ENCODE measurements at regions of chr1 and their contacts with region 1.

Region 1: DNA sequence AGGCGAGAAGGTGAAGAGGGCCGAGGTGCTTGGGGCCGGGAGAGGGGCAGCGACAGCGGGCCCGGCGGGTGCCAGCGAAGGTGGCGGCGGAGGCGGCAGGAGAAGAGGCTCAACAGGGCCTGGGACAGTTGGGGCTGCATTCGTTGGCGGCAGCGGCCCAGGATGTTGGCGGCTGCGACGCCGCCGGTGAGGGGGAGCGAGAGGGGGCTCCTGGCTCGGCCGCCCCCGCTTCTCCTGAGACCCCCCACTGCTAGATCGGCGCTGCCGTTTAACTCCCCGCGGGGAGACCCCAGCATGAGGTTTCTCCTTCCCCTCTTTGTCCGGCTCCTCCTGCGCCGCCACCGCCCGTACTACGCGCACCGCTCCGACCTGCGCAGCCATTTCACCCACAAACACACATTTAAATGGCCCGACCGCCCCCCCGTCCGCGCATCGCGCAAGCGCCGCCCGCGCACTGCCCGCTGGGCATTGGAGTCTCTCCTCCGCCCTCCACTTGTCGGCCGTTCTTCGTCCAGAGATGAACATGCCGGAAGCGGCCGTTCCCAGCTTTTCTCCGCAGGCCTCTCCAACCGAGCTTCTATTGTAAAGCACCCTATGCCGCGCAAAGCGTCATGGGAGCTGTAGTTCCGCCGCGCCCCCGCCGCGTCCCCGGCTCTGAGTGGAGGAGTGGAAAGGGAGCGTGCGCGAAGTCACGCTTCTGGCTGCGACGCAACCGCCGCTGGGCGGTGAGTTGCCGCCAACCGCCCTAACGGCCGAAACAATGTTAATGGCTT is at the start of gene RSBN1:
- DNase-seq: peak; percentile 98 to 99 (median 98)
- H3K4me3 ChIP-seq: peak within 1 kb of the TSS; percentile 74 to 94 (median 79)
- H3K4me3 Mint-ChIP-seq: peak within 1 kb of the TSS; percentile 95 to 98
- H3K27ac ChIP-seq: peak within 1 kb of the TSS; percentile 83 to 91
- H3K27ac Mint-ChIP-seq: peak within 1 kb of the TSS; percentile 88 to 97 (median 95)
- H3K4me1 ChIP-seq: peaks cover 31 to 39% of the 10 kb centered on the region in 2 donors
- H3K4me1 Mint-ChIP-seq: peaks cover 32% of the 10 kb centered on the region
- H3K27me3 ChIP-seq: no peaks in the 10 kb centered on the region
- H3K27me3 Mint-ChIP-seq: peaks cover 0 to 2% (median 1%) of the 10 kb centered on the region in 3 donors
- CTCF ChIP-seq: no peak
- polyA plus RNA-seq, gene RSBN1: 6.5 to 9.0 (median 8.9) TPM

Region 2: DNA sequence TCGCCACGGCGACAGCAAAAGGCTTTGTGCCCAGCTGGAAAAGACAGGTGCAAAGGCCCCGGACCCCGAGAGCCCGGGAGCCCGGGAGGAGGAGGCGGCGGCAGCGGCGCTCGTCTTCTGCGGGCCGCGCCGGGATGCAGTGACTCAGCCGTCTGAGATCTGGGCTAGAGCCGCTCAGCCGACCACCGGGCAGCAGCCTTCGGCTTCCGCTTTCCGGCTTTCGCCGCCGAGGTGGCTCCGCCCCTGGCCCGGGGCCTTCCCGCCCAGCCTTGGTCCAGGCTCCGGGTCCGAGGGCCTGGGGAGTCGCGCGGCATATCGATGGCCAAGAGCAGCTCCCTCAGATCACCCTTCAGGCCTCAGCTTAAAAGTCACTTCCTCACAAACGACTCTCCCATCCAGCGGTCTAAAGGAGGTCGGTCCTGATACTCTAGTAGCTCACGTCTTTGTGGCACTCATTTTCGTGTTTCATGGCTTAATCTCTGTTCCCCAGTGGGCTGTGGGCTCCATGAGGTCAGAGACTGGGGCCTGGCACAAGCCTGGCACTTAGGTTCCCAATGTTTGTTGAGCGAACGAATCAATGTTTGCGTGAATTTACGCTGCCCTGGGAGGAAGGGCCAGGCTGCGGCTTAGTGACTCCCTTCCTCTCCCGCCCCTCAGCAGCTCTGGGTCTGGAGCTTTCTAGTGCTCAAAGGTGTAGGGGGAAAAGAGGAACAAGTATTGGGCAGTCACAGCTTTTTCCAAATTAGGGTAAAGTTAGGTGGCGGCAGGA is 52.6 kb before region 1 on chr1 and contains the start of gene PHTF1:
- intact Hi-C with region 1: loop called (anchors 2 to 5 kb)
- DNase-seq: peak; percentile 84 to 86 (median 85)
- H3K4me3 ChIP-seq: peak within 1 kb of the TSS; percentile 71 to 98 (median 87)
- H3K4me3 Mint-ChIP-seq: peak within 1 kb of the TSS; percentile 96 to 98
- H3K27ac ChIP-seq: peak within 1 kb of the TSS; percentile 95 to 99
- H3K27ac Mint-ChIP-seq: peak within 1 kb of the TSS; percentile 99 to 100 (median 99)
- H3K4me1 ChIP-seq: peaks cover 21 to 27% of the 10 kb centered on the region in 2 donors
- H3K4me1 Mint-ChIP-seq: peaks cover 31% of the 10 kb centered on the region
- H3K27me3 ChIP-seq: no peaks in the 10 kb centered on the region
- H3K27me3 Mint-ChIP-seq: no peaks in the 10 kb centered on the region
- CTCF ChIP-seq: no peak
- polyA plus RNA-seq, gene PHTF1: 6.7 to 12.2 (median 11.1) TPM

Region 3: GRCh38 chr1:113849060-113849459 is 37.0 kb after region 1 on chr1:
- intact Hi-C with region 1: no loop called
- DNase-seq: peak in 1 of 3 donors; percentile 53
- H3K4me3 ChIP-seq: no peak overlapping the region
- H3K4me3 Mint-ChIP-seq: no peak overlapping the region
- H3K27ac ChIP-seq: peak overlapping the region in 1 of 2 donors; percentile 65
- H3K27ac Mint-ChIP-seq: peak overlapping the region in 4 of 7 donors; percentile 59 to 74 (median 71)
- H3K4me1 ChIP-seq: peaks cover 17 to 20% of the 10 kb centered on the region in 2 donors
- H3K4me1 Mint-ChIP-seq: peaks cover 25% of the 10 kb centered on the region
- H3K27me3 ChIP-seq: no peaks in the 10 kb centered on the region
- H3K27me3 Mint-ChIP-seq: peaks cover 0 to 1% (median 0%) of the 10 kb centered on the region in 3 donors
- CTCF ChIP-seq: no peak

Region 4: GRCh38 chr1:114355240-114355639 is 543.2 kb after region 1 on chr1:
- intact Hi-C with region 1: no loop called
- DNase-seq: no peak
- H3K4me3 ChIP-seq: no peak overlapping the region
- H3K4me3 Mint-ChIP-seq: no peak overlapping the region
- H3K27ac ChIP-seq: no peak overlapping the region
- H3K27ac Mint-ChIP-seq: no peak overlapping the region
- H3K4me1 ChIP-seq: peaks cover 33 to 34% of the 10 kb centered on the region in 2 donors
- H3K4me1 Mint-ChIP-seq: peaks cover 41% of the 10 kb centered on the region
- H3K27me3 ChIP-seq: no peaks in the 10 kb centered on the region
- H3K27me3 Mint-ChIP-seq: peaks cover 0 to 4% (median 2%) of the 10 kb centered on the region in 3 donors
- CTCF ChIP-seq: no peak

Measured in CD14-positive monocyte (primary cell).